ENCODE measurements at regions of chr18 and their contacts with region 1.

Region 1: DNA sequence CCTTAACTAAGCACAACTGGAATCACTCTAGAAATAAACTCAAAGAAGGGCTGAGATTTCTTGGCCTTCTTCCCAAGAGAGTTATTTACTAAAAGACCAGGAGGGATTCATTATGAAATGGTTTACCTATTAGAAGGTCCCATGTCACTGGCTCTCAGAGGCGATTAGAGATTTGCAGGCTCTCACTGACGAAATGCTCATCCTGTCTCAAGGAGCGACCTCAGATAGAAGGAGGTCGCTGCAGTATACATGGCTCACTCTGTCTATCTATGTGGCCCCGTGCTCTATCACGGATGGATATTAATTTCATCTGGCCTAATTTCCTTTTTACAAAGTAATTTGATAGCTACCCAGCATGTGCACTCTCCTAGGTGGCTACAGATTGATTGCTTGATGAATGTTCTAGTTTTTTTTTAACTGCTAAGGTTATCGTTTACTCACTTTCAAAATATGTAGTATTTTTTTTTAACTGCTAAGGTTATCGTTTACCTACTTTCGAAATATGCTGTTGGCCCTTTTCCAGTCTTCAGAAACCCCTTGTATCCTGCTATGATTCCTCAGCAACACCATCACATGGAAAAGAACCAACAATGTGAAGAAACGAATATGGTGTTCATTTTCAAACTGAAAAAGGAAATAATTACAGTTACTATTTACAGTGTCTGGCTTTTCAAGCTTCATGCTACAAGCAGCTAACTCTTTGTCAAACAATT is 9.1 kb downstream of the SMIM21 start:
- DNase-seq: no peak
- H3K4me3 ChIP-seq: no peak overlapping the region
- H3K27ac ChIP-seq: no peak overlapping the region
- H3K4me1 ChIP-seq: no peaks in the 10 kb centered on the region
- H3K27me3 ChIP-seq: no peaks in the 10 kb centered on the region
- CTCF ChIP-seq: no peak
- EP300 ChIP-seq: no peak
- POLR2A ChIP-seq: no peak

Region 2: DNA sequence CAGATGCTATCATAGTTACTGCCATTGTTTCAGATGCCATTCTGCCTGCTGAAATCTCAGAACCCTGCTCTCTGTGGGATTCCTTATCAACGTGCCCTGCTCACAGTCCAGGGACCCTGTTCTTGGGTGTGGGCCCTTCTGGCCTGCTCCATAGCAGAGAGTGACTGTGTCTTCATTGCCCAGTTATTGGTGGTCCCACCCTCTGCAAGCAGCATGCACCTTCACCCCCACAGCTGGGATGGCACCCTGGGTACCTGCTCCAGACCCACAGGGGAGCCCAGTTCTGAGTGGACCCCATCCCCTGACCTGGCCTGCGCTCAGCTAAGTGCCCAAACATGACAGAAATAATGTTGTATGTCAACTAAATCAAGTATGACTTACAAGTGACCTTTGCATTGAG is 27.6 kb before region 1 on chr18:
- in situ Hi-C with region 1: no loop called
- intact Hi-C with region 1: loop called (anchors 1 kb)
- DNase-seq: no peak
- H3K4me3 ChIP-seq: no peak overlapping the region
- H3K27ac ChIP-seq: no peak overlapping the region
- H3K4me1 ChIP-seq: no peaks in the 10 kb centered on the region
- H3K27me3 ChIP-seq: no peaks in the 10 kb centered on the region
- CTCF ChIP-seq: no peak
- EP300 ChIP-seq: no peak
- POLR2A ChIP-seq: no peak

Region 3: GRCh38 chr18:75507636-75508035 is 89.2 kb after region 1 on chr18:
- in situ Hi-C with region 1: no loop called
- intact Hi-C with region 1: no loop called
- DNase-seq: no peak
- H3K4me3 ChIP-seq: no peak overlapping the region
- H3K27ac ChIP-seq: no peak overlapping the region
- H3K4me1 ChIP-seq: no peaks in the 10 kb centered on the region
- H3K27me3 ChIP-seq: no peaks in the 10 kb centered on the region
- CTCF ChIP-seq: no peak
- EP300 ChIP-seq: no peak
- POLR2A ChIP-seq: no peak

Measured in transverse colon (tissue), 4 donors.